ENCODE measurements at regions of chr17 and their contacts with region 1.

Region 1: GRCh38 chr17:59361916-59362810 is 30.7 kb downstream of the YPEL2 start:
- DNase-seq: peak; percentile 12 to 68 (median 30)
- ATAC-seq: peak; percentile 69
- H3K4me3 ChIP-seq: peak overlapping the region; percentile 45
- H3K4me3 Mint-ChIP-seq: peak overlapping the region; percentile 69
- H3K27ac ChIP-seq: peak overlapping the region; percentile 64 to 65
- H3K27ac Mint-ChIP-seq: peak overlapping the region; percentile 89
- H3K4me1 ChIP-seq: peaks cover 86% of the 10 kb centered on the region
- H3K4me1 Mint-ChIP-seq: peaks cover 89% of the 10 kb centered on the region
- H3K27me3 ChIP-seq: no peaks in the 10 kb centered on the region
- H3K27me3 Mint-ChIP-seq: no peaks in the 10 kb centered on the region
- CTCF ChIP-seq: no peak

Region 2: GRCh38 chr17:59074494-59074893 is 287.7 kb before region 1 on chr17:
- CTCF ChIA-PET with region 1: no interaction called
- POLR2A ChIA-PET with region 1: no interaction called
- intact Hi-C with region 1: no loop called
- DNase-seq: no peak
- ATAC-seq: no peak
- H3K4me3 ChIP-seq: no peak overlapping the region
- H3K4me3 Mint-ChIP-seq: no peak overlapping the region
- H3K27ac ChIP-seq: no peak overlapping the region
- H3K27ac Mint-ChIP-seq: no peak overlapping the region
- H3K4me1 ChIP-seq: no peaks in the 10 kb centered on the region
- H3K4me1 Mint-ChIP-seq: no peaks in the 10 kb centered on the region
- H3K27me3 ChIP-seq: no peaks in the 10 kb centered on the region
- H3K27me3 Mint-ChIP-seq: no peaks in the 10 kb centered on the region
- CTCF ChIP-seq: no peak

Region 3: GRCh38 chr17:59342681-59343131 is 19.5 kb before region 1 on chr17:
- CTCF ChIA-PET with region 1: interaction called, 3 read pairs
- POLR2A ChIA-PET with region 1: interaction called, 11 read pairs
- intact Hi-C with region 1: no loop called
- DNase-seq: peak in 1 of 14 experiments; percentile 26
- ATAC-seq: peak; percentile 48
- H3K4me3 ChIP-seq: no peak overlapping the region
- H3K4me3 Mint-ChIP-seq: peak overlapping the region; percentile 0
- H3K27ac ChIP-seq: no peak overlapping the region
- H3K27ac Mint-ChIP-seq: peak overlapping the region; percentile 35
- H3K4me1 ChIP-seq: peaks cover 31% of the 10 kb centered on the region
- H3K4me1 Mint-ChIP-seq: peaks cover 80% of the 10 kb centered on the region
- H3K27me3 ChIP-seq: no peaks in the 10 kb centered on the region
- H3K27me3 Mint-ChIP-seq: no peaks in the 10 kb centered on the region
- CTCF ChIP-seq: no peak

Region 4: GRCh38 chr17:59373555-59374495 is 11.7 kb after region 1 on chr17:
- CTCF ChIA-PET with region 1: no interaction called
- POLR2A ChIA-PET with region 1: interaction called, 24 read pairs
- intact Hi-C with region 1: loop called in 1 of 2 experiments (anchors 2 kb)
- DNase-seq: peak in 3 of 14 experiments; percentile 30 to 64 (median 50)
- ATAC-seq: peak; percentile 68
- H3K4me3 ChIP-seq: no peak overlapping the region
- H3K4me3 Mint-ChIP-seq: peak overlapping the region; percentile 71
- H3K27ac ChIP-seq: peak overlapping the region in 1 of 2 donors; percentile 18
- H3K27ac Mint-ChIP-seq: peak overlapping the region; percentile 88
- H3K4me1 ChIP-seq: peaks cover 53% of the 10 kb centered on the region
- H3K4me1 Mint-ChIP-seq: peaks cover 81% of the 10 kb centered on the region
- H3K27me3 ChIP-seq: no peaks in the 10 kb centered on the region
- H3K27me3 Mint-ChIP-seq: no peaks in the 10 kb centered on the region
- CTCF ChIP-seq: no peak

Region 5: GRCh38 chr17:59396134-59396831 is 34.1 kb after region 1 on chr17:
- CTCF ChIA-PET with region 1: no interaction called
- POLR2A ChIA-PET with region 1: no interaction called
- intact Hi-C with region 1: no loop called
- DNase-seq: no peak
- ATAC-seq: no peak
- H3K4me3 ChIP-seq: no peak overlapping the region
- H3K4me3 Mint-ChIP-seq: no peak overlapping the region
- H3K27ac ChIP-seq: no peak overlapping the region
- H3K27ac Mint-ChIP-seq: no peak overlapping the region
- H3K4me1 ChIP-seq: no peaks in the 10 kb centered on the region
- H3K4me1 Mint-ChIP-seq: peaks cover 5% of the 10 kb centered on the region
- H3K27me3 ChIP-seq: no peaks in the 10 kb centered on the region
- H3K27me3 Mint-ChIP-seq: no peaks in the 10 kb centered on the region
- CTCF ChIP-seq: no peak

Region 6: GRCh38 chr17:59440784-59441441 is 78.8 kb after region 1 on chr17:
- CTCF ChIA-PET with region 1: no interaction called
- POLR2A ChIA-PET with region 1: interaction called, 6 read pairs
- intact Hi-C with region 1: loop called in 1 of 2 experiments (anchors 10 kb)
- DNase-seq: peak; percentile 69 to 96 (median 84)
- ATAC-seq: peak; percentile 98
- H3K4me3 ChIP-seq: no peak overlapping the region
- H3K4me3 Mint-ChIP-seq: peak overlapping the region; percentile 9
- H3K27ac ChIP-seq: no peak overlapping the region
- H3K27ac Mint-ChIP-seq: peak overlapping the region; percentile 1
- H3K4me1 ChIP-seq: peaks cover 18% of the 10 kb centered on the region
- H3K4me1 Mint-ChIP-seq: peaks cover 19% of the 10 kb centered on the region
- H3K27me3 ChIP-seq: no peaks in the 10 kb centered on the region
- H3K27me3 Mint-ChIP-seq: no peaks in the 10 kb centered on the region
- CTCF ChIP-seq: peak; percentile 87

Measured in CD4-positive, alpha-beta T cell (primary cell).